Activated CD4-positive, alpha-beta memory T cell treated with anti-CD3 and anti-CD28 coated beads for 36 hours (primary cell): ENCODE measurements at regions of chr19 and their contacts with region 1.

Region 1: GRCh38 chr19:38315657-38316476 is at the start of gene YIF1B:
- DNase-seq: peak; percentile 98
- H3K4me3 Mint-ChIP-seq: peak within 1 kb of the TSS; percentile 83
- H3K27ac Mint-ChIP-seq: peak within 1 kb of the TSS; percentile 88
- H3K4me1 Mint-ChIP-seq: peaks cover 38% of the 10 kb centered on the region
- H3K27me3 Mint-ChIP-seq: no peaks in the 10 kb centered on the region
- total RNA-seq, gene YIF1B: 79.7 to 82.3 TPM

Region 2: GRCh38 chr19:38245826-38246498 is 69.9 kb before region 1 on chr19:
- CTCF ChIA-PET with region 1: interaction called, 17 read pairs
- POLR2A ChIA-PET with region 1: no interaction called
- intact Hi-C with region 1: loop called (anchors 1 kb)
- DNase-seq: no peak
- H3K4me3 Mint-ChIP-seq: no peak overlapping the region
- H3K27ac Mint-ChIP-seq: no peak overlapping the region
- H3K4me1 Mint-ChIP-seq: peaks cover 2% of the 10 kb centered on the region
- H3K27me3 Mint-ChIP-seq: no peaks in the 10 kb centered on the region

Region 3: GRCh38 chr19:38387550-38388348 is 71.9 kb after region 1 on chr19 and contains the start of gene GGN:
- CTCF ChIA-PET with region 1: no interaction called
- POLR2A ChIA-PET with region 1: no interaction called
- intact Hi-C with region 1: loop called (anchors 5 kb)
- DNase-seq: peak; percentile 92
- H3K4me3 Mint-ChIP-seq: peak within 1 kb of the TSS; percentile 78
- H3K27ac Mint-ChIP-seq: peak within 1 kb of the TSS; percentile 69
- H3K4me1 Mint-ChIP-seq: peaks cover 25% of the 10 kb centered on the region
- H3K27me3 Mint-ChIP-seq: peaks cover 3% of the 10 kb centered on the region
- total RNA-seq, gene GGN: 0.41 to 1.2 TPM